ENCODE measurements at regions of chr14 and their contacts with region 1.

Region 1: DNA sequence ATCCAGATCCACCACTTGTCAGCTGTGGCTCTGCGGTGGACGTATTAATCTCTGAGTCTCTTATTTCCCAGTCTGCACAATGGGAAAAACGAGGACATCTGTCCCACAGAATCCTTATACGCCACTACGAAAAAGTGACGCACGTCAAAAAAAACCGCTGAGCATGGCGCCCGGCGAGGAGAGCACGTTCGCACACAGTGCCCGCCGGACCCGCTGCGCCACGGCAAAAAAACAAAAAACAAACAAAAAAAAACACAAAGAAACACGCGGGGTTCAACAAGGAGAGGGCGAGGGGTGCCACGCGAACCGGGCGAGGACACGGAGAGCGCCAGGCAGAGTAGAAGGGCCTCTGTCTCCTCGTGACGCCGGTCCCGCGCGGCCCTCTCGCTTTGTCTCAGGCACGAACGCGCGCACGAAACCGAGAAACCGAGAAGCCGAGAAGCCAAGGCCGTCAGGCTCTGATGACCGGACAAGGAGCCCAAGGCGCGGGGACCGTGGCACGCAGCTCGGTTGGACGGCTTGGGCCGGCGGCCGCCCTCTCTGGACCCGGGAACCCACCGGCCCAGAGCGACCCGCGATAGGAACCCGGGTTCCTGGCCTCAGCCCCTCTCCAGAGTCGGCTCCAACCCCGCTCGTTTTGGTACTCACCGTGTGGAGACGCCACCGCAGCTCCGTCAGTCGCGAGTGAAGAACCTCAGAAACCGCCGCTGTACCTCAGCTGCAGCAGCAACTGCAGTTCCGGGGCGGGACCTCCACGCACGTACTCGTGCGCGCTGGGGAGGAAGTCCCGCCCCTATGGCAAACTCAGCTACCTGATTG is at the start of gene DDX24:
- DNase-seq: peak; percentile 83 to 98
- H3K4me3 ChIP-seq: peak within 1 kb of the TSS; percentile 72 to 98
- H3K27ac ChIP-seq: peak within 1 kb of the TSS; percentile 90 to 98
- H3K4me1 ChIP-seq: peaks cover 6 to 30% of the 10 kb centered on the region in 2 donors
- H3K27me3 ChIP-seq: no peaks in the 10 kb centered on the region
- CTCF ChIP-seq: no peak
- total RNA-seq, gene DDX24: 104 TPM

Region 2: GRCh38 chr14:93332853-93333630 is 747.6 kb before region 1 on chr14 and contains the start of gene BTBD7:
- intact Hi-C with region 1: loop called (anchors 5 kb)
- DNase-seq: peak; percentile 73 to 97
- H3K4me3 ChIP-seq: peak within 1 kb of the TSS; percentile 85 to 91
- H3K27ac ChIP-seq: peak within 1 kb of the TSS; percentile 86 to 97
- H3K4me1 ChIP-seq: peaks cover 0 to 25% of the 10 kb centered on the region in 2 donors
- H3K27me3 ChIP-seq: no peaks in the 10 kb centered on the region
- CTCF ChIP-seq: peak in 1 of 3 experiments; percentile 9
- total RNA-seq, gene BTBD7: 17.2 TPM

Region 3: GRCh38 chr14:94026173-94026888 is 54.3 kb before region 1 on chr14 and contains the start of gene OTUB2:
- intact Hi-C with region 1: loop called (anchors 1 kb)
- DNase-seq: peak; percentile 97 to 99
- H3K4me3 ChIP-seq: peak within 1 kb of the TSS; percentile 79 to 89
- H3K27ac ChIP-seq: no peak within 1 kb of the TSS
- H3K4me1 ChIP-seq: peaks cover 0 to 3% of the 10 kb centered on the region in 2 donors
- H3K27me3 ChIP-seq: no peaks in the 10 kb centered on the region
- CTCF ChIP-seq: no peak
- total RNA-seq, gene OTUB2: 0.21 TPM

Region 4: GRCh38 chr14:94129111-94129757 is 48.6 kb after region 1 on chr14 and contains the start of gene IFI27L2:
- intact Hi-C with region 1: loop called (anchors 1 kb)
- DNase-seq: peak; percentile 57 to 87
- H3K4me3 ChIP-seq: peak within 1 kb of the TSS; percentile 67 to 70
- H3K27ac ChIP-seq: peak within 1 kb of the TSS; percentile 74 to 88
- H3K4me1 ChIP-seq: peaks cover 0 to 5% of the 10 kb centered on the region in 2 donors
- H3K27me3 ChIP-seq: no peaks in the 10 kb centered on the region
- CTCF ChIP-seq: peak in 2 of 3 experiments; percentile 31 to 39
- total RNA-seq, gene IFI27L2: 36.0 TPM

Region 5: DNA sequence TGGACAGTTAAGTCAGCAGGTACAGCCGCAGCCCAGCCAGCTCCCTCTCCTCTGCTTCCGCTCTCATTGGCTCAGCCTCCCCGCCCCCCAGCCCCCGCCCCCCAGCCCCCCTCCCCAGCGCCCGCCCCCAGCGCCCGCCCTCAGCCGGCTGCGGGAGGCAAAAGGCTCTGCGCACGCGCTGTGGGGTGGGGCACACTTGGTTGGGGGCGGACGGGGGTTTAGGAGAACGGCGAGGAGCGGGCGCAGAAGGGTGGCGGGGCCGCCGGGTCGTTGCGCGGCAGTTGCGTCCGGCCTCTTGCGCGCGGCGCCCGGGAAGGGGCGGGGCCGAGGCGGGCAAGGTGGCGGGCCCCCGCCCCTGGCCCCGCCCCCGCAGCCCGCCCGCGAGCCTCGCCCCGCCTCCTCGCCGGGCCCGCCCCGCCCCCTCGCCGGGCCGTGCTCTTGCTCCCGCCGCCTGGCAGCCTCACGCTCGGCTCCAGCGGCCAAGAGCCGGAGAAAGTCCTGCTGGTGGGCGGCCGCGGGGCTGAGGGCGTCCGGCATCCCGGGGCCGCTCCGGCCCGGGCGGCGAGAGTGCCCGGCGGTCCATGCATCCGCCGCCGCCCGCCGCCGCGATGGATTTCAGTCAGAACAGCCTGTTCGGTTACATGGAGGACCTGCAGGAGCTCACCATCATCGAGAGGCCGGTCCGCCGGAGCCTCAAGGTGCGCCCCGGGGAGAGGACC is 93.4 kb after region 1 on chr14 and contains the start of gene PPP4R4:
- intact Hi-C with region 1: loop called (anchors 5 kb)
- DNase-seq: peak; percentile 63 to 92
- H3K4me3 ChIP-seq: peak within 1 kb of the TSS; percentile 75 to 84
- H3K27ac ChIP-seq: peak within 1 kb of the TSS; percentile 50 to 61
- H3K4me1 ChIP-seq: peaks cover 3 to 14% of the 10 kb centered on the region in 2 donors
- H3K27me3 ChIP-seq: no peaks in the 10 kb centered on the region
- CTCF ChIP-seq: no peak
- total RNA-seq, gene PPP4R4: not detected

Region 6: DNA sequence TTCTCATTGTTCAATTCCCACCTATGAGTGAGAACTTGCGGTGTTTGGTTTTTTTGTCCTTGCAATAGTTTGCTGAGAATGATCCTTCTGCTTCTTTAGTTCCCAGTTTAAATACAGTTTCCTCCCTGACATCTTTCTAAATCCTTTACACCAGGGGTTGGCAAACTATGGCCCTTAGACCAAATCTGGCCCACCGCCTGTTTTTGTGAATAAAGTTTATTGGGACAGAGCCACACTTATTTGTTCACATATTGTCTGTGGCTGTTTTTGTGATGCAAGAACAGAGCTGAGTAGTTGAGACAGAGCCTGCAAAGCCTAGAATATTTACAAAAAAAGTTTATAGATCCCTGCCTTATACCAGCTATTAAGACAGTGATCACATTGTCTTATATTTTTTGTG is 158.7 kb after region 1 on chr14:
- intact Hi-C with region 1: no loop called
- DNase-seq: no peak
- H3K4me3 ChIP-seq: no peak overlapping the region
- H3K27ac ChIP-seq: no peak overlapping the region
- H3K4me1 ChIP-seq: no peaks in the 10 kb centered on the region
- H3K27me3 ChIP-seq: no peaks in the 10 kb centered on the region
- CTCF ChIP-seq: no peak

Measured in ascending aorta (tissue), 2 donors.